Breast epithelium (tissue), 4 donors: ENCODE measurements at regions of chr14 and their contacts with region 1.

Region 1: GRCh38 chr14:74875941-74876913 is at the start of gene PROX2:
- DNase-seq: no peak
- H3K4me3 ChIP-seq: no peak within 1 kb of the TSS
- H3K27ac ChIP-seq: no peak within 1 kb of the TSS
- H3K4me1 ChIP-seq: no peaks in the 10 kb centered on the region
- H3K27me3 ChIP-seq: no peaks in the 10 kb centered on the region
- CTCF ChIP-seq: no peak
- POLR2A ChIP-seq: no peak
- total RNA-seq, gene PROX2: not detected

Region 2: DNA sequence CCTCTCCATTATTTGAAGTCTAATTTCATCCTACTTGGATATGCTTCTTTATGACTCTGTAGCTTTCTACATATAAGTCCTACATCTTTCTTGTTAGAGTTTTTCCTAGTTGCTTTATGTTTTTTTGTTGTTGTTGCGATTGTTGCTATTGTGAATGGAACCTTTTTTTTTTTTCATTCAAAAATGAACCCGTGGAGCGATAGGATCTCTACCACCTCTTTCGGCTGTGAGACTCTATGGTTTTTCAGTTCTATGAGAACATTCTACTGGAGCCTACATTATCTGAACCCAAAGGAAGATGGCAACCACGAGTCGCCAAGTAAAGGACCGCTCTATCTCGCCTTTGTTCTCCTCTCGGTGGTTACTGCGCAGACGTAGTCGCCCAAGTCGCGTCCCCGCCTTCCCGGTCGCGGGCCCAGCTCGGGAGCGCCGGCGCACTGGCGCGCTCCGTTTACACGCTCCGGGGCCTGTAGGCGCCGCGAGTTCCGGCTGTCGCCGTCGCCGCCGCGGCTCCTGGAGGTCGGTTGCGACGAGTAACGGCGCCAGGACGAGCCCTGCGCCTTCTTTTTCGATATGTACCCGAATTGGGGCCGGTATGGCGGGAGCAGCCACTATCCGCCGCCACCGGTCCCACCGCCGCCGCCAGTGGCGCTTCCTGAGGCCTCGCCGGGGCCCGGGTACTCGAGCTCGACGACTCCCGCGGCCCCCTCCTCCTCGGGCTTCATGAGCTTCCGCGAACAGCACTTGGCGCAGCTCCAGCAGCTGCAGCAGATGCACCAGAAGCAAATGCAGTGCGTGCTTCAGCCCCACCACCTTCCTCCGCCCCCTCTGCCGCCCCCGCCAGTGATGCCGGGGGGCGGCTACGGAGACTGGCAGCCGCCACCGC is 113.1 kb before region 1 on chr14 and contains the start of gene YLPM1:
- intact Hi-C with region 1: no loop called
- DNase-seq: peak; percentile 86 to 87
- H3K4me3 ChIP-seq: peak within 1 kb of the TSS; percentile 77 to 99 (median 97)
- H3K27ac ChIP-seq: peak within 1 kb of the TSS; percentile 93 to 95
- H3K4me1 ChIP-seq: no peaks in the 10 kb centered on the region
- H3K27me3 ChIP-seq: no peaks in the 10 kb centered on the region
- CTCF ChIP-seq: peak in 1 of 3 donors; percentile 22
- POLR2A ChIP-seq: peak; percentile 75
- total RNA-seq, gene YLPM1: 50.9 to 97.0 (median 79.6) TPM

Region 3: DNA sequence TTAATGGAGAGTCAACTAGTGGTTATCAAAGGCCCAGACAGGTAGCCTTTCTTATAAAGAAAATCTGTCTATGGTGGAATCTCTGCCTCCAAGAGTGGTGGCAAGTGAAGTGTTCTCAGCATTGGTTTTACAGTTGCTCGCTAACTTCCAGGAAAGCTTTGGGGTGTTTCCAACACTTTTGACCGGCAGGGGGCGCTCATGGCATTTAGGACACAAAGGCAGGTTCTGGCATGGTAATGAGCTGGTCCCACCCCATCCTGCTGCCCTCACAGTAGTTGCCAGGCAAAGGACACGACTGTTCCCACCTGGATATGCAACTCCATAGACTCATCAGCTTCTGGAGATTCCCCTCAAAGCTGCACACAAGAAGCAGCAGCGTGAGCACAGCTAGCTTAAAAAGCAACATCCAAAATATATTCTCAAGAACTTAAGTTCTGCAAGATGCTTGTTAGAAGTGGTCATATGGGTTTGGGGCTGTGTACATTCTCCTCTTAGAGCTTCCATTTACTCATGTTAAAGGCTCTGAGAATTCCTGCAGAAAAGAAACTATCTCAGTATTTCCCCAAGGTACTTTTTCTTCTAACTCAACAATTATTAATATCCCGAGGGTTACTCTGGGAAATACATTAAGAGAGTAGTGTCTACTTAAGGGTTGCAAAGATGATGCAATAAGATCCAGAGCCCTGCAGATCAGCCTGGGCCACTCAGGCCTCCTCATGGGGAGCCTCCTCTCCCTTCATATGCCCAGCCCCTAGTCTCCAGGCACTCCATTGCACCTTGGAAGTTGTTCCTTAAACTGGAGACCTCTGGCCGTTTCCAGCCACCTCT is 15.1 kb before region 1 on chr14:
- intact Hi-C with region 1: loop called (anchors 2 kb)
- DNase-seq: peak; percentile 80 to 92
- H3K4me3 ChIP-seq: no peak overlapping the region
- H3K27ac ChIP-seq: no peak overlapping the region
- H3K4me1 ChIP-seq: no peaks in the 10 kb centered on the region
- H3K27me3 ChIP-seq: no peaks in the 10 kb centered on the region
- CTCF ChIP-seq: peak; percentile 77 to 85 (median 84)
- POLR2A ChIP-seq: no peak